ENCODE measurements at regions of chr22 and their contacts with region 1.

Region 1: DNA sequence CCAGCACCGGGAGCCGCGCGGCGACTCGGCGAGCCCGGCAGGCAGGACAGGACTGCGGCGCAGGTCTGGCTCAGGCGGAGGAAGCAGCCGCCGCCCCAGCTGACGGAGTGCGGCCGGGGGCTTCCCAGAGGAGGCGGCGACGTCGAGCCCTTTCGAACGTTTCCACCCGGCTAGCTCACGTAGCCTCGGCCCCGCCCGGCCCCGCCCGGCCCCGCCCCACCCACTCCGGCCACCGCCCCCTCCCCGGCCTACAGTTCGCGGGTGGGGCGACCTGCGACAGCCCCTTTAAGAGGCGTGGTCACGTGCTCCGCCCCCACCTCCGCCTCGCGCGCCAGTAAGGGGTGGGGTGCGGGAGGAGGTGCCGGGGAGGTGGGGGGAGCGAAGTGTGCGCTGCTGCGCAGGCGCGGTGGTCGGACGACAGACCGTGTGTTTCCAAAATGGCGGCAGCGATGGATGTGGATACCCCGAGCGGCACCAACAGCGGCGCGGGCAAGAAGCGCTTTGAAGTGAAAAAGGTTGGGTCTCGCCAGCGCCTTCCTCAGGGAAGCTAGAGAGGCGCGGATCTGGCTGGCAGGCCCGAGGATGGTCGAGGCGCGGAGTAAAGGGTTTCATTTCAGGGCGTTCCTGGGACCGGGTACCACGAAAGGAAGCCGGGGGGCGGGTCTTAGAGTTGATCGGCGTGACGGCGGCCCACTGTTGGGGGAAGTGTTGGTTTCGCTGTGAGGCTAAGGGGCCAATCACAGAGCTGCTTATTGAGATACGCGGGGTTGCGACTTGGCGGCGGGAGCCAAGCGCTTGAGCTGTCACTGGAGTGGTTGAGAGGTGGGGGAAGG is at the start of gene RBX1:
- DNase-seq: peak; percentile 99
- ATAC-seq: peak; percentile 94 to 97 (median 96)
- H3K4me3 ChIP-seq: peak within 1 kb of the TSS; percentile 91 to 95 (median 94)
- H3K27ac ChIP-seq: peak within 1 kb of the TSS; percentile 73 to 97 (median 75)
- H3K4me1 ChIP-seq: peaks cover 0 to 7% (median 2%) of the 10 kb centered on the region in 4 donors
- H3K27me3 ChIP-seq: no peaks in the 10 kb centered on the region
- CTCF ChIP-seq: no peak
- POLR2A ChIP-seq: peak; percentile 82
- total RNA-seq, gene RBX1: 14.2 to 24.3 (median 17.4) TPM

Region 2: DNA sequence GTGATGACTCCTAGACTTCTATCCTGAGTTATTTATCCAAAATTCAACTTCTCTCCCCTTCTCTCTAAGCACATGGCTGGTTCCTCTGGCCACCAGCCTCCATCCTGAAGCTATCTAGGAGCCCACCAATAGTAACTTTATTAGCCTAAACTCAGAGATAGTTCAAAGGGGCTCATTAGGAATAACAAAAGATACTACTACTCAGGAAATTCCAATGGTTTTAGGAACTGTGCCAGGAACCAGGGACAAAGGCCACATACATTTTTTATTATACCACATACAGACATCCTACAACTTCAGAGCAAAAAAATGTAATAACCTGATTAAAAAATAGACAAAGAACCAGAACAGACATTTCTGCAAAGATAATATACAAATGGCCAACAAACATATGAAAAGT is 159.9 kb before region 1 on chr22:
- intact Hi-C with region 1: no loop called
- DNase-seq: no peak
- ATAC-seq: no peak
- H3K4me3 ChIP-seq: no peak overlapping the region
- H3K27ac ChIP-seq: no peak overlapping the region
- H3K4me1 ChIP-seq: peaks cover 0 to 6% (median 3%) of the 10 kb centered on the region in 4 donors
- H3K27me3 ChIP-seq: no peaks in the 10 kb centered on the region
- CTCF ChIP-seq: no peak
- POLR2A ChIP-seq: no peak

Region 3: DNA sequence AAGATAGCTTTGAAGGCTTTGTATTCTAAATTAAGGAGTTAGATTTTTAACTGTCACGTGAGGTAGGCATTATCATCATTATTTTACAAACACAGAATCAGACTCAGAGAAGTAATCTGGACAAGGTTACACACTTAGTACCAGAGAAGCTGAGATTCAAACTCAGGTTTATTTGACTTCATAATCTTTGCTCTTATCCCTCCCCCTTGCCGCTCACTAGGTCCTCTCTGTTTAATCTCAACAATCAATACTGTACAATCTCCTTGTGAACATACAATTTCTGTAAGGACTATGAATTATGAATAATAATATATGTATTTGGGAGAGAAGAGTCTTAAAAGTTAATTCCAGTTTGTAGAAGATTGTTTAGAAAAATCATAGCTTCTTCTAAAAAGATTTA is 84.1 kb before region 1 on chr22:
- intact Hi-C with region 1: no loop called
- DNase-seq: no peak
- ATAC-seq: peak in 3 of 4 donors; percentile 23 to 31 (median 25)
- H3K4me3 ChIP-seq: no peak overlapping the region
- H3K27ac ChIP-seq: peak overlapping the region in 1 of 3 donors; percentile 35
- H3K4me1 ChIP-seq: peaks cover 0 to 25% (median 4%) of the 10 kb centered on the region in 4 donors
- H3K27me3 ChIP-seq: no peaks in the 10 kb centered on the region
- CTCF ChIP-seq: no peak
- POLR2A ChIP-seq: no peak

Region 4: GRCh38 chr22:41085842-41086241 is 134.7 kb after region 1 on chr22:
- intact Hi-C with region 1: loop called in 1 of 2 experiments (anchors 10 kb)
- DNase-seq: no peak
- ATAC-seq: no peak
- H3K4me3 ChIP-seq: no peak overlapping the region
- H3K27ac ChIP-seq: no peak overlapping the region
- H3K4me1 ChIP-seq: no peaks in the 10 kb centered on the region
- H3K27me3 ChIP-seq: no peaks in the 10 kb centered on the region
- CTCF ChIP-seq: no peak
- POLR2A ChIP-seq: no peak

Measured in right lobe of liver (tissue), 6 donors.